ENCODE measurements at regions of chr13 and their contacts with region 1.

Region 1: GRCh38 chr13:49985129-49985528 is 11.7 kb upstream of the TRIM13 start:
- DNase-seq: no peak
- H3K4me3 ChIP-seq: no peak overlapping the region
- H3K4me3 Mint-ChIP-seq: no peak overlapping the region
- H3K27ac Mint-ChIP-seq: no peak overlapping the region
- H3K4me1 ChIP-seq: no peaks in the 10 kb centered on the region
- H3K4me1 Mint-ChIP-seq: no peaks in the 10 kb centered on the region
- H3K27me3 ChIP-seq: no peaks in the 10 kb centered on the region
- H3K27me3 Mint-ChIP-seq: no peaks in the 10 kb centered on the region
- CTCF ChIP-seq: no peak

Region 2: DNA sequence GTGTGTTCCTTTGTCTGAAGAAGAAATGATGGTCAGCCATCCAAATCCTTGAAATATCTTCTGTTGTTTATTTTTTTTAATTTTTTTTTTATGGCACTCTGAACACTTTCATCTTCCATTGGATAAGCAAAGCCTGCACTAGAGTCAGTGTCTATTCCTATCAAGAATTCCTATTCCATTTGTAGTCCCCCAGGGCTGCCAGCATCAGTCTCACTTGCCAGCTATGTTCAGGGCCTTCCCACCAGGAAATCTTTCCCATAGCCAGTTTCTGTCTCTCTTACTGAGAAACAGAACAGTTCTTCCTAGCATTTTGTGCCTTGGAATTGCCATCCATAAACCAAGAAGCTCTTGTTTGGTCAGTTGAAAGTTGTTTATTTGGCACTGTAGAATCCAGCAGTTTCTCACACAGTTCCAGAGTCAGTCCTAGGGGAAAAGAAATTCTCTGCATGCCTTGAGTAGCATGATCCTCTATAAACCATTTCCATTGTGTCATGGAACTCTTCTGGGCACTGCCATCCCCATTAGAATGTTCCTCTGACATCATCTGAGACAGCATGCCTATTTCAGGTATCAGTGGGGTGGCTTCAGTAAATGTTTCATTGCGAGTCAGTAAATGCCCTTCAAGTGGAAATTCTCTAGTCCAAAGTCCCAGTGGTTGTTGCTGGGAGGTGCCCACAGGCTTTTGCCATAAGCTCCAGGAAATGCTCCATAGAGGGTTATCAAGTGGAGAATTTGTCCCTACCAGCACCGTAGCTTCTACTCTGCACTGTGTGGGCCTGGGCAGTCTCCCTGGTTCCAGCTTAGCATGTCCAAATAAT is 30.2 kb before region 1 on chr13:
- CTCF ChIA-PET with region 1: interaction called, 12 read pairs
- POLR2A ChIA-PET with region 1: no interaction called
- intact Hi-C with region 1: no loop called
- DNase-seq: no peak
- H3K4me3 ChIP-seq: no peak overlapping the region
- H3K4me3 Mint-ChIP-seq: no peak overlapping the region
- H3K27ac Mint-ChIP-seq: no peak overlapping the region
- H3K4me1 ChIP-seq: peaks cover 31% of the 10 kb centered on the region
- H3K4me1 Mint-ChIP-seq: peaks cover 7% of the 10 kb centered on the region
- H3K27me3 ChIP-seq: no peaks in the 10 kb centered on the region
- H3K27me3 Mint-ChIP-seq: no peaks in the 10 kb centered on the region
- CTCF ChIP-seq: no peak